ENCODE measurements at regions of chr5 and their contacts with region 1.

Region 1: DNA sequence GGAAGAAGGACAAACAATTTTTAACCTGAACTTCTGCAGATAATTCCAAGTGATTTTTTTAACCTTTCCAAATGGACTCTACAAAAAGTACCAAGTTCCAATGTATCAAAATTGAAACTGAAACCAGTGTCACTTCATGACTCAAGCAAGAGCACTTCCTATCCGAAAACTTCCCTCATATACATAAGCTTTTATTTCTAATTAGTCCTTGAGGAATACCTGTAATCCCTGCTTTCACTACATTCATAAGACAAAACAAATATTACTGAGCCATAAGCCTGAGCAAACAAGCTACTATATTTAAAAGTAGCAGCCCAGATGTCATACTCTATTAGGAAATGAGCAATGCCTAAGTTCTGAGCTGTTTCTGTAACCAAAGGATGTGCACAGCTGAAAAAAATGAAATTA is 224.4 kb downstream of the EBF1 start:
- DNase-seq: no peak
- H3K4me3 Mint-ChIP-seq: no peak overlapping the region
- H3K27ac Mint-ChIP-seq: no peak overlapping the region
- H3K4me1 Mint-ChIP-seq: peaks cover 29% of the 10 kb centered on the region
- H3K27me3 Mint-ChIP-seq: no peaks in the 10 kb centered on the region

Region 2: DNA sequence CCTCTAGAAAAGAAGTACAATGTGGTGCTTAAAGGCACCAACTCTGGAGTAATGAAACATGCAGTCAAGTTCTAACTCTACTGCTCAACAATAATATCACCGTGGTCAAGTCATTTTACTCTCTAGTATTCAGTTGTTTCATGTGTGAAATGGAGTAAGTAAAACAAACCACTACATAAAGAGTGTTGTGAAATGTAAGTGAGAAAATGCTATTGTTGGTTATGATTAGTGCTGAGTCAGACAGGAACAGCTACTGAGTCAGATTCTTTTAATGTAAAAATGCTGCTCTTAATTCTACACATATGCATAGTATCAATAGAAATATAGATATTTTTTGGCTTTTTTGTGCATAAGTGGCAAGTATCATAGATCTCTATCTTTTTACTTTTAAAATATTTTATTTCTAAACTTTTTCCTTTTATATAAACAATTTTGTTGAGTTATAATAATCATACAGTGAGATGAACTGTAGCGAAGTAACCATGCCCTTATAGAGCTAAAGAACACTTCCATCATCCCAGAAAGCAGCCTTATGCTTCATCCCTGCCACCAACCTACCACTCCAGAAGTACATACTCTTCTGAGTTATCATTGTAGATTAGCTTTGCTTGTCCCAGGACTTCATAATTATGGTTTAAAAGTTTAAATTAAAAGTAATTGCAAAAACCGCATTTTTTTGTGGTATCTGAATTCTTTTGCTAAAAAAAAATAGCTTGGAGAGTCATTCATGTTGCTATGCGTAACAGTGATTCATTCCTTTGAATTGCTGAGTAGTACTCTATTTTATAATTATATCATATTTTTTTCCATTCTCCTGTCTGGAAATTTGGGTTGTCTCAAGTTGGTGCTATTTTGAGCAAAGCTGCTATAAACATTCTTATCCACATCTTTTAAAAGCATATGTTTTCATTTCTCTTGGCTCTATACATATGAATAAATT is 468.1 kb before region 1 on chr5:
- CTCF ChIA-PET with region 1: no interaction called
- intact Hi-C with region 1: loop called (anchors 1 kb)
- DNase-seq: no peak
- H3K4me3 Mint-ChIP-seq: no peak overlapping the region
- H3K27ac Mint-ChIP-seq: no peak overlapping the region
- H3K4me1 Mint-ChIP-seq: peaks cover 8% of the 10 kb centered on the region
- H3K27me3 Mint-ChIP-seq: no peaks in the 10 kb centered on the region

Region 3: DNA sequence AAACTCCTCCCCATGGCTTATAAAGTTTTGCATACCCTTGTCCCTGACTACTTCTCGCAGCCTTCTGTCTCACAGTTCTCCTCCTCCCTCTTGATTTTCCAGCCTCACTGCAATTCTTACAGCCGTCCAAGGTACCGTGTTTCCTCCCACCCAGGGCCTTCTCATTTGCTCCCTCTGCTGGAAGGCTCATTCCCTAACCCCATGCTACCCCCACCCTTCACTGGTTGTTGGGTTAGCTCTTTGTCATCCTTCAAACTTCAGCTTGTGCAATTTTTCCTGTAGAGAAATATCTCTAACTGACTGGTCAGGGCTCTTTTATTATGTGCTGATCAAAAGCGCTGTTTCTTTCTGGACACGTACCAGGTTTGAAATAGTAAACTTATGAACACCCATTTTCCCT is 104.8 kb before region 1 on chr5:
- CTCF ChIA-PET with region 1: no interaction called
- intact Hi-C with region 1: no loop called
- DNase-seq: no peak
- H3K4me3 Mint-ChIP-seq: no peak overlapping the region
- H3K27ac Mint-ChIP-seq: no peak overlapping the region
- H3K4me1 Mint-ChIP-seq: peaks cover 2% of the 10 kb centered on the region
- H3K27me3 Mint-ChIP-seq: no peaks in the 10 kb centered on the region

Region 4: DNA sequence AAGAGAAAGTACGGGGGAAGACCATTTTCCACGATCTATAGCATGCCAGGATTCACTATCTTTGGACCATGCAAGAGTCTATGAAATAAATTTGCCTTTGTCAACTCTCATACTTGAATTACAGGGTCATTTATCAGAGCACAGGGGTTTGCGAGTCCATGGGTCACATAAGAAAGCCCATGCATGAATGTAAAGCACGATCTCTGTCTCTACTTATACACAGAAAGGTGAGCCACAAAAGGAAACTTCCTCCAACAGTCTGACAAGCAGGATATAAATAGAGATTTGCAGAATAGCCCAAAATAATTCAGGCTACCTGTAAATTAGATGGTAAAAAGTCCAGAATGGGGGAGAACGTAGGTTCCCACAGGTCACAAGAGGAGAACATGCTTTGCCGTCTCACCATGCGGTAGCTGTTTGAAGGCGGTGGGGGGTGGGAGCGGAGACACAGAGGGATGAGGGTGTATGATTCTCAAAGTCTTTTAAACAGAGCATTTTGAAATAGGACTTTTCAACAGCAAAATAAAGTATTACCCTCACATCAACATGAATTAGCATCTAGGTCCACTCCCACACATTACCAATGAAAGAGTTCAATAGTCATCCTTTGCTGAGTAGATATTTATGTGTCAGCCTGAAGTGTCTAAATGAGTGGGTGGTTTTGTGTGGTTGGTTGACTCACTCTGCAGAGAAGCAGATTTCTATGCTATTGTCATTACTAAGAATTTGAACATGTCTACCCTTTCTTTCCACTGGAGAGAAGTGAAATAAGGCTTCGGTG is 55.2 kb before region 1 on chr5:
- CTCF ChIA-PET with region 1: no interaction called
- intact Hi-C with region 1: loop called (anchors 1 kb)
- DNase-seq: peak; percentile 42
- H3K4me3 Mint-ChIP-seq: no peak overlapping the region
- H3K27ac Mint-ChIP-seq: no peak overlapping the region
- H3K4me1 Mint-ChIP-seq: peaks cover 28% of the 10 kb centered on the region
- H3K27me3 Mint-ChIP-seq: peaks cover 2% of the 10 kb centered on the region

Region 5: GRCh38 chr5:158910782-158911692 is 35.8 kb after region 1 on chr5:
- CTCF ChIA-PET with region 1: no interaction called
- intact Hi-C with region 1: loop called (anchors 1 kb)
- DNase-seq: peak; percentile 10
- H3K4me3 Mint-ChIP-seq: no peak overlapping the region
- H3K27ac Mint-ChIP-seq: no peak overlapping the region
- H3K4me1 Mint-ChIP-seq: no peaks in the 10 kb centered on the region
- H3K27me3 Mint-ChIP-seq: no peaks in the 10 kb centered on the region

Region 6: DNA sequence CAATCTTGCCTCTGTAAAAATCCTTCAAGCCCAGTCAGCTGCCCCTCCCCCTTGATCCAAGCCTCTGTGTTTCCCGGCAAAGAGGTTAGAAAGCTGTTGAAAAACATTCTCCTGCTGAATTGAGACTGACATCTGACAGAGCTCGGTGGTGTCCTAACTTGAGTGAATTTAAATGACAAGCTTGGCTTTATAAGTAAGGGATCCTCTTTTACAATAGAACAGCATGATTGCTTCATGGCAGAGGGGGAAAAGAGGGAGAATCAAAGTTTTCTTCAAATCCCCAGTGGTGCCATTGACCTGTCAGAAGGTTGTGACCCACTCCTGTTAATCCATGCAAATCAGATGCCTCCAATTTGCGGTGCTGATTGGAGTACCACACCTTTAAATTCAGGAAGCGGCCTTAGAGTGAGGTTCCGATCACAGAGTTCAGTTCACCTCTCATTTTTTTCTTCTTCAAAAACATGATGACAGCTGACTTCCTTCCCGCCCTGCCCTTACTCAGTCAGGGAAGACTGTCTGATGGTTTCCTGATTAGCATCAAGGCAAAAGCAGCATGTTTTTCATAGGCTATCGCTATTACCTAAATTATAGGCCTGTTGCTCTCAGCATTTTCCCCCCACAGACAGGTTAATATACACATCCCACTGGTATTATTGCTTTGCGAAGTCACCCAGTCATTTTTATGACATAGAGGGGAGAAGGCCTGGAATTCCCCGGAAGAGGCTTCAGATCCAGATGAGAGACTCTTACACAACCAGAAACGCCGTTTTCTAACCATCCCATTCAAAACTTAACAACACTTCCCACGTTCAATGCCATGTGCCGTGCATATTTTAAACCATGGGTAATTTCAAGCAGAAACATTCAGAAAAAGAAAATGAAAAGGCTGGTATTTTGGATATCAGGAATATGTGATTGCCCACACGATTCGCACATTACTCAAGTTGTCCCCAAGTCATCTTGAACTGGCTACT is 83.0 kb after region 1 on chr5:
- CTCF ChIA-PET with region 1: no interaction called
- intact Hi-C with region 1: loop called (anchors 1 kb)
- DNase-seq: peak; percentile 56
- H3K4me3 Mint-ChIP-seq: no peak overlapping the region
- H3K27ac Mint-ChIP-seq: peak overlapping the region; percentile 19
- H3K4me1 Mint-ChIP-seq: peaks cover 18% of the 10 kb centered on the region
- H3K27me3 Mint-ChIP-seq: no peaks in the 10 kb centered on the region

Region 7: DNA sequence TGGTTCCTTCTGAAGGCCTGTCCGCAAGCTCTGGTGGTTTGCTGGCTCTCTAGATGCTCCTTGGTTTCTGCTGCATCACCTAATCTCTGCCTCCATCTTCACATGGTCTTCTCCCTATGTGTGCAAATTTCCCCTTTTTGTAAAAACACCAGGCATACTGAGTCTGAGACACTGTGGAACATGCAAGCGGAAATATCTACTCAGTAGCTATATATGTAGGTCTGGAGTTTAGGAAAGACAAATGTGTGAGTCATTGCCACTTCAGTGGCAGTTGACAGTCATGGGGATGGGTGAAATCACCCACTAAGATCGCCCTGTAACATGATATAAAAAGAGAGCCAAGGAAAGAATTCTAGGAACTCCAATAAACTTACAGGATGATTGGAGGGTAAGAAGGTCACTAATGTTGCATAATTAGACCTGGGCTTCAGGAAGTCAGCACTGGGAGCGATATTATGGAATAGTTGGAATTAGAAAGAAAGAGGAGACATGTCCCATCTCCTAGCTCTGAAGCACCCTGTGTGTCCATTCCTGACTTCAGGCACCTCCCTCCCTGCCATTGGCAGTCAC is 365.1 kb after region 1 on chr5:
- CTCF ChIA-PET with region 1: no interaction called
- intact Hi-C with region 1: loop called (anchors 10 kb)
- DNase-seq: peak; percentile 24
- H3K4me3 Mint-ChIP-seq: no peak overlapping the region
- H3K27ac Mint-ChIP-seq: peak overlapping the region; percentile 55
- H3K4me1 Mint-ChIP-seq: peaks cover 44% of the 10 kb centered on the region
- H3K27me3 Mint-ChIP-seq: no peaks in the 10 kb centered on the region